Ovary (tissue), 10 donors: ENCODE measurements at regions of chr17 and their contacts with region 1.

Region 1: GRCh38 chr17:28335201-28335955 is at the starts of genes IFT20 and TNFAIP1:
- DNase-seq: peak; percentile 98 to 99 (median 98)
- H3K4me3 ChIP-seq: peak within 1 kb of the TSS; percentile 94
- H3K27ac ChIP-seq: peak within 1 kb of the TSS; percentile 71 to 83
- H3K4me1 ChIP-seq: peaks cover 5% of the 10 kb centered on the region
- H3K27me3 ChIP-seq: no peaks in the 10 kb centered on the region
- CTCF ChIP-seq: peak in 2 of 3 donors; percentile 5 to 17
- EP300 ChIP-seq: peak; percentile 89
- POLR2A ChIP-seq: peak; percentile 86
- total RNA-seq, gene IFT20: 20.2 to 49.2 (median 24.3) TPM
- total RNA-seq, gene TNFAIP1: 13.5 to 36.3 (median 31.5) TPM

Region 2: GRCh38 chr17:28295677-28296578 is 39.5 kb before region 1 on chr17:
- intact Hi-C with region 1: no loop called
- DNase-seq: no peak
- H3K4me3 ChIP-seq: no peak overlapping the region
- H3K27ac ChIP-seq: no peak overlapping the region
- H3K4me1 ChIP-seq: no peaks in the 10 kb centered on the region
- H3K27me3 ChIP-seq: no peaks in the 10 kb centered on the region
- CTCF ChIP-seq: no peak
- EP300 ChIP-seq: no peak
- POLR2A ChIP-seq: no peak

Region 3: GRCh38 chr17:28433721-28434120 is 98.3 kb after region 1 on chr17:
- intact Hi-C with region 1: no loop called
- DNase-seq: no peak
- H3K4me3 ChIP-seq: no peak overlapping the region
- H3K27ac ChIP-seq: no peak overlapping the region
- H3K4me1 ChIP-seq: no peaks in the 10 kb centered on the region
- H3K27me3 ChIP-seq: no peaks in the 10 kb centered on the region
- CTCF ChIP-seq: no peak
- EP300 ChIP-seq: no peak
- POLR2A ChIP-seq: no peak

Region 4: GRCh38 chr17:28509789-28510188 is 174.4 kb after region 1 on chr17:
- intact Hi-C with region 1: no loop called
- DNase-seq: no peak
- H3K4me3 ChIP-seq: no peak overlapping the region
- H3K27ac ChIP-seq: no peak overlapping the region
- H3K4me1 ChIP-seq: no peaks in the 10 kb centered on the region
- H3K27me3 ChIP-seq: no peaks in the 10 kb centered on the region
- CTCF ChIP-seq: no peak
- EP300 ChIP-seq: no peak
- POLR2A ChIP-seq: no peak

Region 5: GRCh38 chr17:28951991-28952975 is 616.9 kb after region 1 on chr17:
- intact Hi-C with region 1: loop called in 2 of 4 experiments (anchors 5 kb)
- DNase-seq: peak; percentile 94 to 98 (median 95)
- H3K4me3 ChIP-seq: peak overlapping the region; percentile 70
- H3K27ac ChIP-seq: peak overlapping the region; percentile 95
- H3K4me1 ChIP-seq: peaks cover 2% of the 10 kb centered on the region
- H3K27me3 ChIP-seq: no peaks in the 10 kb centered on the region
- CTCF ChIP-seq: no peak
- EP300 ChIP-seq: peak; percentile 24
- POLR2A ChIP-seq: no peak